ENCODE measurements at regions of chr1 and their contacts with region 1.

Region 1: DNA sequence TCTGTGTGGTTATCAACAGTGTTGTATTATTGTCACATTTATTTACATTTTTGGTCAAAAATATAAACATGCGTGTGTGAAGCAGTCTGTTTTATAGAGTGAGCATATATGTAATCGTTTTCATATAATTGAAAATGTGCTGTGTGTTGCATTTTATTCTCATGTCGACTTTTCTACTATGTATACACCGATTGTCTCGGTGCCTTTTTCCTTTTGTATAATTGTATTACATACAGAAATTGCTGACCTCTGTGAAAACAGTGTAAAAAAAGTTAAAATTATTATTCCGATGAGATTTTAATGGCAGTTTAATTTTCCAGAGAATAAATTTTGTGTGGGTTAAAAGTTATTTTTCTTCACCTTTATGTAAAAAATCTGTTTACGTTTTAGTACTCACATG is 62.4 kb upstream of the SERTAD4 start:
- DNase-seq: no peak
- ATAC-seq: no peak
- H3K4me3 ChIP-seq: no peak overlapping the region
- H3K4me3 Mint-ChIP-seq: no peak overlapping the region
- H3K27ac ChIP-seq: no peak overlapping the region
- H3K27ac Mint-ChIP-seq: no peak overlapping the region
- H3K4me1 ChIP-seq: no peaks in the 10 kb centered on the region
- H3K4me1 Mint-ChIP-seq: no peaks in the 10 kb centered on the region
- H3K27me3 ChIP-seq: peaks cover 0 to 5% of the 10 kb centered on the region in 2 experiments
- H3K27me3 Mint-ChIP-seq: peaks cover 8 to 18% of the 10 kb centered on the region in 2 donors

Region 2: DNA sequence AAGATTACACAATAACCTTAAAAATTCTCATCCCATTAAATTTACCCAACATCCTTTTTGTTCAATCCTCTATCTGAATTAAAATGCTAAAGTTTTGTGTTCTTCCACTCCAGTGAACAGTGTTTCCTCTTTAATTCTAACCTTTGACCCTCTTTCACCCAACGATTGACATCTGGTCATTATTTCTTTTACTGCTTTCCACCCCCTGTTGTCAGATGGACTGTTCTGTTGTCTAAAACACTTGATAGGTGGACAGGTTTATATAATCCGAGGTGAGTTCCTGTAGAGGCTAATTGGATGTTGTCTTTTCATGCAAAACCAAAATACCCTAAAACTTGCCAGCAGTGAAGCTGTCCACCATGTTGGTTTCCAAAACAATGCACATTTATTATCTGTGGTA is 11.0 kb before region 1 on chr1:
- CTCF ChIA-PET with region 1: interaction called in 1 of 2 experiments, 12 read pairs
- POLR2A ChIA-PET with region 1: no interaction called
- DNase-seq: no peak
- ATAC-seq: no peak
- H3K4me3 ChIP-seq: no peak overlapping the region
- H3K4me3 Mint-ChIP-seq: no peak overlapping the region
- H3K27ac ChIP-seq: no peak overlapping the region
- H3K27ac Mint-ChIP-seq: no peak overlapping the region
- H3K4me1 ChIP-seq: no peaks in the 10 kb centered on the region
- H3K4me1 Mint-ChIP-seq: no peaks in the 10 kb centered on the region
- H3K27me3 ChIP-seq: peaks cover 0 to 4% of the 10 kb centered on the region in 2 experiments
- H3K27me3 Mint-ChIP-seq: peaks cover 6 to 7% of the 10 kb centered on the region in 2 donors

Measured in T-cell (primary cell).